Thyroid gland (tissue), 4 donors: ENCODE measurements at regions of chr14 and their contacts with region 1.

Region 1: DNA sequence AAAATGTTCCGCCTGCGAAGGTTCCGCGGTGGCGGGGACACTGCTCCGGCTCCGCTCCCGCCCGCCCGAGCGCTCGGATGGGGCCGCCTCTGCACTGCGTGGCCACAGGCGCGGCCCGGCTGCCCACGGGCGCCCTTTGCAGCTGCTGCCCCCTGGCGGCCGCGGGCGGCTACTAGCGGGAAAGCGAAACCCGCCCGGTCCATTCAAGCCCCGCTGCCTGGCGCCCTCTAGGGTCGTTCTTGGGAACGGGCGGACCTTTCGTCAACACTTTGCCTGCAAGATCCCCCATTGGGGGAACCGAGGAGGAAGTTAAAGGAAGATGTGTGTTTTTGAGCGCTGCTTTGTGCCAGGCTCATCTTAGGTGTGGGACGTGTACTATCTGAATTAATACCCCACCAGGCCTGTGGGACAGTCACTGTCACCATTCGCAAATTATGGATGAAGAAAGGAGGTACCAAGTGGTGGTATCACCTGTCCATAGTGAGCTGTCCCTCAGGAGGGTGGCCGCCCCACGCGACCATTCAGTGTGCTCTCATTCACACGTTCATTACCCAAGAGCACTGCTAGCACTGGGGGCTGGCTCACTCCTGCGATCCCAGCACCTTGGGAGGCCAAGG is 19.4 kb downstream of the GPR132 start:
- DNase-seq: peak; percentile 87 to 93
- H3K4me3 ChIP-seq: no peak overlapping the region
- H3K27ac ChIP-seq: no peak overlapping the region
- H3K4me1 ChIP-seq: peaks cover 0 to 11% of the 10 kb centered on the region in 2 donors
- H3K27me3 ChIP-seq: no peaks in the 10 kb centered on the region
- CTCF ChIP-seq: peak; percentile 97 to 100 (median 100)
- POLR2A ChIP-seq: no peak

Region 2: GRCh38 chr14:104768437-104769323 is 277.1 kb before region 1 on chr14:
- intact Hi-C with region 1: loop called (anchors 10 kb)
- DNase-seq: peak; percentile 90 to 91
- H3K4me3 ChIP-seq: no peak overlapping the region
- H3K27ac ChIP-seq: peak overlapping the region; percentile 46 to 62 (median 54)
- H3K4me1 ChIP-seq: peaks cover 11 to 17% of the 10 kb centered on the region in 2 donors
- H3K27me3 ChIP-seq: no peaks in the 10 kb centered on the region
- CTCF ChIP-seq: peak; percentile 71 to 94 (median 90)
- POLR2A ChIP-seq: peak in 1 of 2 donors; percentile 3

Region 3: GRCh38 chr14:104893435-104894207 is 152.2 kb before region 1 on chr14:
- intact Hi-C with region 1: loop called (anchors 5 kb)
- DNase-seq: no peak
- H3K4me3 ChIP-seq: no peak overlapping the region
- H3K27ac ChIP-seq: no peak overlapping the region
- H3K4me1 ChIP-seq: peaks cover 14 to 22% of the 10 kb centered on the region in 2 donors
- H3K27me3 ChIP-seq: no peaks in the 10 kb centered on the region
- CTCF ChIP-seq: no peak
- POLR2A ChIP-seq: no peak

Region 4: DNA sequence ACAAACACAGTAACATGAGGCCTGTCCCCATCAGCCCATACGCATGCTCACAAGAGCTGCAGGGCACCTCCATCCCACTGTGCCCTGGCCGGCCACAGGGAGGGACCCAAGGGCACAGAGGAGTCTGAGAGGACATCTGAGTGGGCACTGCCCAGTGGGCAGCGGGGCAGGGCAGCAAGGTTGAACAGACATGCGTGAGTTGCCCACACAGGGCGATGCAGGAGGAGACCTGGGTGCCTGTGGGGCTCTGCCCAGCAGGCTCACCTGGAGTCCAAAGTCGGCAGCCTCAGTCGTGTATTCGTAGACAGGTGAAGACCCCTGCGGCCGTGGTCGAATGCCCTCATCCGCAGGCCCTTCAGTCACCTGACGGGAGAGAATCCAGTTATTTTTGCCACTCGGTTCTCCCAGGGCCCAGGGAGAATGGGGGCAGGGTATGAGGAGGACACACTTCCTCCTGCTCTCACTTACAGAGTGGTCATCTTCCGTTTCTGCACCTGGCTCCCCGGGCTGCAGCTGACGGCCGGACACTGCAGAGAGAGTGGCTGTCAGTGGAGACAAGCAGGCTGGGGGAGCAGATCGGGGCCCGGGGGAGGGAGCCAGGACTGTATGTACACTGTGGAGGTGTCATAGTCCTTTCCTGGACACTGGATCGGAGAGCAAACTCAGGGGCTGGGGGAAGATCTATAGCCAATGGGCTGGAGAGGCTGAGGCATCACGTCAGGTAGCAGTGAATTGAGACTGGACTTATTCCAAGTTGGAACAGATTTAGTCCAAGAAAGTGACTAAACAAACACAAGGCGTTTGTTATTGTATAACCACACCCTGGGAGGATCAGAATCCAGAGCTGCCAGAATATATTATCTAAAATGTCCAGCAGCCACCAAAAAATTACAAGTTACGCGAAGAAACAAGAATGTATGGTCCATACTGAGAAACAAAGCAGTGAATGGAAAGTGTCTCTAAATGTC is 88.4 kb before region 1 on chr14:
- intact Hi-C with region 1: no loop called
- DNase-seq: no peak
- H3K4me3 ChIP-seq: no peak overlapping the region
- H3K27ac ChIP-seq: no peak overlapping the region
- H3K4me1 ChIP-seq: peaks cover 0 to 14% of the 10 kb centered on the region in 2 donors
- H3K27me3 ChIP-seq: no peaks in the 10 kb centered on the region
- CTCF ChIP-seq: no peak
- POLR2A ChIP-seq: no peak

Region 5: GRCh38 chr14:104976198-104977007 is 69.4 kb before region 1 on chr14:
- intact Hi-C with region 1: loop called (anchors 2 kb)
- DNase-seq: peak; percentile 86 to 91
- H3K4me3 ChIP-seq: no peak overlapping the region
- H3K27ac ChIP-seq: no peak overlapping the region
- H3K4me1 ChIP-seq: peaks cover 52 to 94% of the 10 kb centered on the region in 2 donors
- H3K27me3 ChIP-seq: no peaks in the 10 kb centered on the region
- CTCF ChIP-seq: peak; percentile 84 to 94 (median 88)
- POLR2A ChIP-seq: no peak